Activated CD8-positive, alpha-beta T cell treated with anti-CD3 and anti-CD28 coated beads, Interleukin-2, amount 10 ng/mL, durations not matched to agents 7 days and 5 days (primary cell): ENCODE measurements at regions of chr2 and their contacts with region 1.

Region 1: GRCh38 chr2:27016801-27017325 is 15.9 kb upstream of the TMEM214 start:
- DNase-seq: peak; percentile 67
- ATAC-seq: peak; percentile 57
- H3K4me3 Mint-ChIP-seq: no peak overlapping the region
- H3K27ac Mint-ChIP-seq: no peak overlapping the region
- H3K4me1 Mint-ChIP-seq: peaks cover 8% of the 10 kb centered on the region
- H3K27me3 Mint-ChIP-seq: no peaks in the 10 kb centered on the region

Region 2: GRCh38 chr2:26970244-26970920 is 46.5 kb before region 1 on chr2 and contains the start of gene MAPRE3:
- CTCF ChIA-PET with region 1: interaction called, 150 read pairs
- POLR2A ChIA-PET with region 1: no interaction called
- DNase-seq: peak; percentile 81
- ATAC-seq: peak; percentile 91
- H3K4me3 Mint-ChIP-seq: peak within 1 kb of the TSS; percentile 65
- H3K27ac Mint-ChIP-seq: no peak within 1 kb of the TSS
- H3K4me1 Mint-ChIP-seq: peaks cover 11% of the 10 kb centered on the region
- H3K27me3 Mint-ChIP-seq: peaks cover 53% of the 10 kb centered on the region
- total RNA-seq, gene MAPRE3: 0.52 to 0.95 TPM

Region 3: GRCh38 chr2:26976237-26976636 is 40.6 kb before region 1 on chr2:
- CTCF ChIA-PET with region 1: interaction called, 12 read pairs
- POLR2A ChIA-PET with region 1: no interaction called
- DNase-seq: no peak
- ATAC-seq: no peak
- H3K4me3 Mint-ChIP-seq: no peak overlapping the region
- H3K27ac Mint-ChIP-seq: no peak overlapping the region
- H3K4me1 Mint-ChIP-seq: peaks cover 4% of the 10 kb centered on the region
- H3K27me3 Mint-ChIP-seq: peaks cover 34% of the 10 kb centered on the region

Region 4: GRCh38 chr2:26982102-26982742 is 34.6 kb before region 1 on chr2:
- CTCF ChIA-PET with region 1: interaction called, 11 read pairs
- POLR2A ChIA-PET with region 1: no interaction called
- DNase-seq: peak; percentile 34
- ATAC-seq: peak; percentile 84
- H3K4me3 Mint-ChIP-seq: no peak overlapping the region
- H3K27ac Mint-ChIP-seq: no peak overlapping the region
- H3K4me1 Mint-ChIP-seq: no peaks in the 10 kb centered on the region
- H3K27me3 Mint-ChIP-seq: peaks cover 8% of the 10 kb centered on the region